Psoas muscle (tissue), 8 donors: ENCODE measurements at regions of chr11 and their contacts with region 1.

Region 1: GRCh38 chr11:64878494-64879243 is at the start of gene EHD1:
- DNase-seq: peak; percentile 99
- ATAC-seq: peak; percentile 82 to 92 (median 88)
- H3K4me3 ChIP-seq: peak within 1 kb of the TSS; percentile 99
- H3K27ac ChIP-seq: peak within 1 kb of the TSS; percentile 97
- H3K4me1 ChIP-seq: peaks cover 42% of the 10 kb centered on the region
- H3K27me3 ChIP-seq: no peaks in the 10 kb centered on the region
- CTCF ChIP-seq: peak; percentile 46
- total RNA-seq, gene EHD1: 34.7 to 71.0 (median 61.1) TPM

Region 2: GRCh38 chr11:64688534-64688982 is 190.1 kb before region 1 on chr11:
- intact Hi-C with region 1: no loop called
- DNase-seq: peak; percentile 91 to 95
- ATAC-seq: peak; percentile 91 to 94 (median 92)
- H3K4me3 ChIP-seq: peak overlapping the region; percentile 63
- H3K27ac ChIP-seq: peak overlapping the region; percentile 71
- H3K4me1 ChIP-seq: peaks cover 18% of the 10 kb centered on the region
- H3K27me3 ChIP-seq: no peaks in the 10 kb centered on the region
- CTCF ChIP-seq: peak; percentile 91

Region 3: GRCh38 chr11:64810271-64810890 is 68.3 kb before region 1 on chr11 and contains the start of gene MEN1:
- intact Hi-C with region 1: loop called in 1 of 2 experiments (anchors 1 kb)
- DNase-seq: peak; percentile 96 to 98
- ATAC-seq: peak; percentile 98 to 99 (median 98)
- H3K4me3 ChIP-seq: peak within 1 kb of the TSS; percentile 76
- H3K27ac ChIP-seq: peak within 1 kb of the TSS; percentile 54
- H3K4me1 ChIP-seq: peaks cover 9% of the 10 kb centered on the region
- H3K27me3 ChIP-seq: no peaks in the 10 kb centered on the region
- CTCF ChIP-seq: no peak
- total RNA-seq, gene MEN1: 7.2 to 13.5 (median 10.3) TPM

Region 4: GRCh38 chr11:64859542-64860414 is 18.9 kb before region 1 on chr11:
- intact Hi-C with region 1: loop called (anchors 2 kb)
- DNase-seq: no peak
- ATAC-seq: no peak
- H3K4me3 ChIP-seq: peak overlapping the region; percentile 29
- H3K27ac ChIP-seq: peak overlapping the region; percentile 98
- H3K4me1 ChIP-seq: peaks cover 92% of the 10 kb centered on the region
- H3K27me3 ChIP-seq: no peaks in the 10 kb centered on the region
- CTCF ChIP-seq: no peak